ENCODE measurements at regions of chr7 and their contacts with region 1.

Region 1: DNA sequence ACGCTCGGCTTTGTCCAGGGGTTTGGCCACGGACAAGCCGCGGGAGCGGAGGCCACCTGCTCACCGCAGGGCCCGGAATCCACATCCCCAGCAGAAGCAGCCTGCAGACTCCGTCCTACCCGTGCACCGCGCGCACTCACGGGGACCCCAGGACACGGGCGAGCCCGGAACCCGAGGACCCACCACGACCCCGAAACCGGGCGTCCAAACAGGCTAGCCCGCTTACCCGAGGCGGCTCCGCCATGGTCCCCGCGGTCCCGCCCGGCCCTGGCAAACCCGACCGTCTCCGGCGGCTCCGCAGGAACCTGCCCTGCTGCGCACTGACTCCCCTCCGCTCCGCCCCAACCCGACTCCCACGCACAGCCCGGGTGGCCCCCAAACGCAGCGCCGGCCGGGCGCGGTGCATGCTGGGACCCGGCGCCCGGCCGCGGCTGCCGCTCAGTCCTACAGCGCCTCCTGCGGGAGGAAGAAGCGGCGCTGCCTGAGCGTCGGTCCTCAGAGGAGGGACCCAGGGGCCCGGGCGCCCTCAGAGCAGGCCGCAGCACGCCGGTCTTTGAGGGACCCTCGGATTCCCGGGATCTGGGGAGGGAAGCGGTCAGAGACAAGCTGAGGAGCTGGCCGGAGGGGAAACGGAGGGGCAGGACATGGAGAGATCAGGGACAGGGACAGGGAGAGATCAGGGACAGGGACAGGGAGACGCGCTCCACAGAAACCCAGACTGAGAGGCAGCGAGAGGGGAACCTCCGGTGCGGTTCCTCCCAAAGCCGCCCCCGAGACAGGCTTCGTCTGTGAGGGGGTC is at the start of gene ZNF786:
- DNase-seq: peak; percentile 95
- ATAC-seq: peak; percentile 87
- H3K4me3 Mint-ChIP-seq: peak within 1 kb of the TSS; percentile 82
- H3K27ac Mint-ChIP-seq: peak within 1 kb of the TSS; percentile 99
- H3K4me1 Mint-ChIP-seq: peaks cover 25% of the 10 kb centered on the region
- H3K27me3 Mint-ChIP-seq: no peaks in the 10 kb centered on the region
- CTCF ChIP-seq: peak; percentile 81
- total RNA-seq, gene ZNF786: 4.0 to 4.3 TPM

Region 2: GRCh38 chr7:148987010-148987750 is 103.4 kb before region 1 on chr7:
- CTCF ChIA-PET with region 1: no interaction called
- POLR2A ChIA-PET with region 1: no interaction called
- intact Hi-C with region 1: loop called (anchors 1 kb)
- DNase-seq: peak; percentile 90
- ATAC-seq: peak; percentile 81
- H3K4me3 Mint-ChIP-seq: peak overlapping the region; percentile 90
- H3K27ac Mint-ChIP-seq: peak overlapping the region; percentile 95
- H3K4me1 Mint-ChIP-seq: peaks cover 44% of the 10 kb centered on the region
- H3K27me3 Mint-ChIP-seq: peaks cover 4% of the 10 kb centered on the region
- CTCF ChIP-seq: no peak

Region 3: DNA sequence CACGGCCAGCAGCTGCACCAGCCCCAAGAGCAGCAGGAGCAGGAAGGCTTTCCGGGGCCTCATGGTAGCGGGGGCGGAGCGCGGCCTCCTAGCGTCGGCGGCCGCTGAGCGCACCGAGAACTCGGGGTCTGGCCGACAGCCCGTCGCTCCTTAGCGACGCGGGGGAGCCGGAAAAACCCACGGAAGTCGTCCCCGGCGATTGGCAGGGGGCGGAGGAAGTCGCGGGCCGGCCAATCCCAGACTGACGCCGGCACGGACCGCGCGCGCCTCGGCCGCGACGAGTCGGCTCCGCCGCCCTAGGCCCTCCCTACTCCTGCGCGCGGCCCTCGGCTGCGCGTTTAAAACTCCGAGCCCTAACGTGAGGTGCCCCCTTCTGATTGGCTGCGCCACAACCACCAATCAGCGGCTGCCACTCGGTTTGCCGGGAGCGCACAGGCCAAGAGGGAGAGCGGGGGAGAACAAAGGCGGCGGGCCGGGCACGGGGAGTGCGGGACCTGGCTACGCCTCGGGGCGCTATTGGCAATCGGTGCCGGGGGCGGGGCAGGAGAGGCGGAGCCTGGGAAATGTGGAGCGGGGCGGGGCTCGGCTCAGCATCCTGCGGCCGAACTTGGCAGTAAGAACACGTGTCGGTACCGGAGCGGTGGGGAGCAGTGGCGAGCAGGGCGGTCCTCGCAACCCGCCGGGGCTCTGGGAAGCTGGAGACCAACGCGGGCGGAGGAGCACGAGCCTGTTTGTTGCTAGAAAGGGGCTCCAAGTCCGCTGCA is 62.1 kb before region 1 on chr7 and contains the start of gene PDIA4:
- CTCF ChIA-PET with region 1: no interaction called
- POLR2A ChIA-PET with region 1: interaction called, 3 read pairs
- intact Hi-C with region 1: loop called (anchors 5 kb)
- DNase-seq: peak; percentile 100
- ATAC-seq: peak; percentile 90
- H3K4me3 Mint-ChIP-seq: peak within 1 kb of the TSS; percentile 93
- H3K27ac Mint-ChIP-seq: peak within 1 kb of the TSS; percentile 93
- H3K4me1 Mint-ChIP-seq: peaks cover 31% of the 10 kb centered on the region
- H3K27me3 Mint-ChIP-seq: no peaks in the 10 kb centered on the region
- CTCF ChIP-seq: no peak
- total RNA-seq, gene PDIA4: 72.6 to 75.7 TPM

Region 4: DNA sequence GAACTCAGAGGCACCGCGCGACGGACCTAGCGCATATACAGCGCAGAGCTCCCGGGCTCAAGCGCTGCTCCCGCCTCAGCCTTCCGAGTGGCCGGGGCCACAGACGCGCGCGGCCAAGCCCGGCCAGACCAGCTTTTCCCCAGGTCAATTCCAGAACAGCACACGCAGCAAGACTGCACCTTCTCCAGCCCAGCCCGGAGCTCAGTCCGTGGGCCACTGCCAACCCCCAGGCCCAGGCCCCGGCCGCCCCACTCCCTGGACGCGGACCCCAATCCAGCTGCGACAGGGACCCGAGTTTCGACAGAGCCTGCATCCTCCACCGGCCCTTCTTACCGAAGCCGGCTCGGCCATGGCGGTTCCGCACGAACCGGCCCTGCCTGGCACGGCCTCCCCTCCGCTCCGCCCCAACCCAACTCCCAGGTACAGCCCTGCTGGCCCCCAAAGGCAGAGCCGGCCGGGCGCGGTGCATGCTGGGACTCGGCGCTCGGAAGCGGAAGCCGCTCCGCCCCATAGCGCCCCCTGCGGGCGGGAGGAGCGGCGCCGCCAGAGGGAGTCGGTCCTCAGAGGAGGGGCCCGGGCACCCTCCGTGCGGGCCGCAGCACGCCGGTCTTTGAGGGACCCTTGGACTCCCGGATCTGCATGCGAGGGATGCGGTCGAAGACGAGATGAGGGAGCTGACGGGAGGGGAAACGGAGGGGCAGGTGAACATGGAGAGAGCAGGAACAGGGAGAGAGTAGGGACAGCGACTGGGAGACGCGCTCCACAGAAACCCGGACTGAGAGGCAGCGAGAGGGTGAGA is 35.5 kb after region 1 on chr7 and contains the start of gene ZNF425:
- CTCF ChIA-PET with region 1: interaction called, 4 read pairs
- POLR2A ChIA-PET with region 1: interaction called, 9 read pairs
- intact Hi-C with region 1: loop called (anchors 2 kb)
- DNase-seq: peak; percentile 92
- ATAC-seq: peak; percentile 88
- H3K4me3 Mint-ChIP-seq: peak within 1 kb of the TSS; percentile 95
- H3K27ac Mint-ChIP-seq: peak within 1 kb of the TSS; percentile 98
- H3K4me1 Mint-ChIP-seq: peaks cover 19% of the 10 kb centered on the region
- H3K27me3 Mint-ChIP-seq: no peaks in the 10 kb centered on the region
- CTCF ChIP-seq: peak; percentile 89
- total RNA-seq, gene ZNF425: 0.22 to 0.29 TPM

Region 5: GRCh38 chr7:149377386-149377785 is 286.8 kb after region 1 on chr7:
- CTCF ChIA-PET with region 1: no interaction called
- POLR2A ChIA-PET with region 1: no interaction called
- intact Hi-C with region 1: no loop called
- DNase-seq: no peak
- ATAC-seq: no peak
- H3K4me3 Mint-ChIP-seq: no peak overlapping the region
- H3K27ac Mint-ChIP-seq: no peak overlapping the region
- H3K4me1 Mint-ChIP-seq: no peaks in the 10 kb centered on the region
- H3K27me3 Mint-ChIP-seq: peaks cover 1% of the 10 kb centered on the region
- CTCF ChIP-seq: no peak